Activated CD4-positive, alpha-beta T cell treated with anti-CD3 and anti-CD28 coated beads, Interleukin-2, amount 10 ng/mL, durations not matched to agents 24 days and 14 days (primary cell): ENCODE measurements at regions of chr2 and their contacts with region 1.

Region 1: DNA sequence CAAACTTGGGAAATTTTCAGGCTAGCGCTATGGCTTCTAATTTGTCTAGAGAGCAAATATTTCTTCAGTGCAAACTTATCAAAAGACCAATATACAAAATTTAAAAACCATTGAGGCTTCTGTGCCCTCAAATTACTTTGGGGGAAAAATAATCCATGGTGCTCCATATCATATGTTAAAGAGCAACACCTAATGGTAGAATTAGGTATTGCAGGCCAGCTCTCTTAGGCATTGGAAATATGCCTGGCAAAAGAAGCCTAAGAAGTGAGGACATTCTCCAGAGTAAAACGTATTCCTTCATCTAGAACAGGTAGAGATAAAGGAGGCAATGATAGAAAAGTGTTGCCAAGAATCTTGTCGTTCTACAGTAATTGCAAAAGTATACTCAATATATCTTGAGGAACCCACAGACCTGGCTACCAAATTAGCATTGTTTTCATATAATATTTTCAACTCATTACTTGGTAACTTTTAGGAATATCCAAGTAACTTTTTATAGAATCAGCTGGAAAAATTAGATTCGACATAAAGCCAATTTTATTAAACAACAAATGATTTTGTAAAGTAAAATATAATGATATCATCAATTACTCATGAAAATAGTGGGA is 401.1 kb downstream of the BCL11A start:
- DNase-seq: peak; percentile 61
- H3K4me3 Mint-ChIP-seq: no peak overlapping the region
- H3K27ac Mint-ChIP-seq: no peak overlapping the region
- H3K4me1 Mint-ChIP-seq: no peaks in the 10 kb centered on the region
- H3K27me3 Mint-ChIP-seq: peaks cover 3% of the 10 kb centered on the region

Region 2: GRCh38 chr2:59301466-59302402 is 850.6 kb before region 1 on chr2:
- intact Hi-C with region 1: loop called (anchors 5 kb)
- DNase-seq: peak; percentile 63
- H3K4me3 Mint-ChIP-seq: no peak overlapping the region
- H3K27ac Mint-ChIP-seq: no peak overlapping the region
- H3K4me1 Mint-ChIP-seq: no peaks in the 10 kb centered on the region
- H3K27me3 Mint-ChIP-seq: no peaks in the 10 kb centered on the region